H1 (cell line): ENCODE measurements at regions of chr11 and their contacts with region 1.

Region 1: DNA sequence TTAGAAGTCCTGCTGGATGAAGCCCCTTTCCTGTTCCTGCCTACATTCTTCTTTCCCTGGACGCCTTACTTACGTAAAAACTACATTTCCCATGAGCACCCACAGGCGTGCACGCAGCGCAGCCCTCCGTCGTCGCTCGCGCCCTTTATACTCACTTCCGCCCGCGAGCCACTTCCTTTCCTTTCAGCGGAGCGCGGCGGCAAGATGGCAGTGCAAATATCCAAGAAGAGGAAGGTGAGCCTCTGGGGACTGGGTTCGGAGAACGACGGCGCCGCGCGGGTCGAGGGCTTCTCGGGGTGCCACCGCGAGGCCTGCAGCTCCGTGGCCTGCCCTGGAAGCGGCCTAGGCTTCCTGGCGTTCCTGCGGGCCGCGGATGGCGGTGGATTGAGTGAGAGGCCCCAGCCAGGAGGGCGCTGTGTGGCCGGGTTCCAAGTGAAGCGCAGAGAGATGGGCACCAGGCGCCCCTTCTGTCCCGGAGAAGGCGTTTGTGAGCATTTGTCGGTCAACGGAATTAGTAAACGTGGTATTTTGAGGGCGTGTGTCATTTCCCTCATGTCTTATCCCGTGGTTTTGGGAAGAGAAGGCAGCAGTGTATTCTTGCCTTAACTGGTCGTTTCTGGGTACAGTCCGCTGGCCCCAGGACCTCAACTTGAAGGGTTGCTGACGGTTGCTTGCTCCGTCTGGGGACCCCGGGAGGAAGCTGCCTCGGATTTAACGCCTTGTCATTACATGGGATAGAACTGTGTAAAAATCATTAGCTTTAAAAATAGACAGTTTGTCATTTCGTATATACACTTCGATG is at the start of gene RPS3:
- DNase-seq: peak; percentile 80 to 90
- H3K4me3 ChIP-seq: peak within 1 kb of the TSS; percentile 86 to 100 (median 99)
- H3K27ac ChIP-seq: peak within 1 kb of the TSS; percentile 97
- H3K4me1 ChIP-seq: peaks cover 0 to 9% (median 4%) of the 10 kb centered on the region in 4 experiments; a peak in 6 of 7 replicates
- H3K27me3 ChIP-seq: no peaks in the 10 kb centered on the region
- CTCF ChIP-seq: no peak
- EP300 ChIP-seq: no peak
- POLR2A ChIP-seq: peak; percentile 99
- RAD21 ChIP-seq: no peak
- total RNA-seq, gene RPS3: 3,813 and 3,882 TPM in 2 replicates

Region 2: GRCh38 chr11:75087319-75088305 is 311.9 kb before region 1 on chr11:
- CTCF ChIA-PET with region 1: no interaction called
- POLR2A ChIA-PET with region 1: no interaction called
- DNase-seq: no peak
- H3K4me3 ChIP-seq: no peak overlapping the region
- H3K27ac ChIP-seq: no peak overlapping the region
- H3K4me1 ChIP-seq: no peaks in the 10 kb centered on the region
- H3K27me3 ChIP-seq: no peaks in the 10 kb centered on the region
- CTCF ChIP-seq: peak in 2 of 3 experiments; percentile 10 to 42; a peak in 3 of 4 replicates
- EP300 ChIP-seq: no peak
- POLR2A ChIP-seq: no peak
- RAD21 ChIP-seq: no peak

Region 3: DNA sequence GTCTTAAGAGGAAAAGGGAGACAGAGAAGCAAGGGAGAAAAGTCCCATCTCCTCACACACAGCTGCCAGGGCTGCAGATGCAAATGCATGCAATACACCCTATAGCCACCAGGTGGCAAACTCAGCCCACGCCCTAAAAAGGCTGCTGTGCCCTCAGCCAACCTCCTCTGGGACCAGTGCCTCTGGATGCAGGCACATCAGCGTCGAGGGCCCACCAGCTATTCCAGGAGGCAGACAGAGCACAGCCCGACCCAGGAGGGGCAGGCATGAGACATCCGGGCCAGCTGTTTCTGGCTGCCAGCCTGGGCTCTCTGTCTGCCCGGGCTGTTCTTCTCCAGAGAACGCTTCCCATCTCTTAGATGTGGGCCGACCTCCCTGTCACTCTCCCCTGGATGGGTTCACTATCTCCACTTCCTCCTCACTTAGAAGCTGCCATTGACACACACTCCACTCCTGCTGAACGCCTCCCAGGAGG is 119.3 kb before region 1 on chr11:
- CTCF ChIA-PET with region 1: interaction called, 5 read pairs
- POLR2A ChIA-PET with region 1: interaction called, 11 read pairs
- DNase-seq: peak; percentile 76 to 92
- H3K4me3 ChIP-seq: no peak overlapping the region
- H3K27ac ChIP-seq: no peak overlapping the region
- H3K4me1 ChIP-seq: peaks cover 0 to 6% (median 0%) of the 10 kb centered on the region in 4 experiments; a peak in 2 of 7 replicates
- H3K27me3 ChIP-seq: no peaks in the 10 kb centered on the region
- CTCF ChIP-seq: peak; percentile 94 to 100 (median 96)
- EP300 ChIP-seq: no peak
- POLR2A ChIP-seq: no peak
- RAD21 ChIP-seq: peak; percentile 98

Region 4: GRCh38 chr11:75351791-75352587 is 47.6 kb before region 1 on chr11:
- CTCF ChIA-PET with region 1: interaction called, 4 read pairs
- POLR2A ChIA-PET with region 1: interaction called, 12 read pairs
- DNase-seq: peak in 1 of 2 experiments; percentile 63
- H3K4me3 ChIP-seq: peak overlapping the region; percentile 53 to 82 (median 58)
- H3K27ac ChIP-seq: no peak overlapping the region
- H3K4me1 ChIP-seq: peaks cover 10 to 28% (median 15%) of the 10 kb centered on the region in 4 experiments
- H3K27me3 ChIP-seq: peaks cover 4 to 11% (median 10%) of the 10 kb centered on the region in 4 experiments; a peak in 6 of 7 replicates
- CTCF ChIP-seq: peak in 2 of 3 experiments; percentile 13 to 22; a peak in 2 of 4 replicates
- EP300 ChIP-seq: no peak
- POLR2A ChIP-seq: no peak
- RAD21 ChIP-seq: peak; percentile 5 to 22; a peak in 1 of 4 replicates

Region 5: DNA sequence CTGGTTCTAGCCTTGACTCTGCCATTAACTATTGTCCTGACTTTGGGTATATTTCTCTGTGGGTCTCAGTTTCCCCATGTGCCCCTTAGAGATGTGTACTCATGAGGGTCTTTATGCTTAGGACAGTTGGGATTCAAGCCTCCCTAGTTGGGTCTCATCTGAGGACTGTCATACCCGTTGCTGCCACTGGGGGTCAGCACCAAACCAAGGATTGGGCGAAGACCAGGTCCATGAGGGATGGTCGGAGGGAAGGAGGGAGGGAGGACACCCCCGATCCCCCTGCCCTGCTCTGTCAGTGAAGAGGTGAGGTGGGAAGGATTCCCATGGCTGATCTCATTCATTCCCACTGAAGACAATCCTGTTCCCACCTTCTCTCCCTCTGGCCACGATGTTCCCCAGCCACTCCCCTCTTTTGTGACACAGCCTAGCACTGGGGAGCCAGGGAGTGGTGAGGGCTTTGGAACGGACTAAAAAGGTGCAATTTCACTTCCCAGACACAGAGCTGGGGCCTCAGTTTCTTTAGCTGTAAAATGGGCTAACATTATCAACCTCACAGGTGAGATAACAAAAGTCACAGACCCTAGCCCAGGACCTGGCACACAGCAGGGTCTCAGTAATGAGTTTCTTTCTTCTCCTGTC is 45.9 kb after region 1 on chr11:
- CTCF ChIA-PET with region 1: interaction called, 7 read pairs
- POLR2A ChIA-PET with region 1: interaction called, 13 read pairs
- DNase-seq: peak in 1 of 2 experiments; percentile 95
- H3K4me3 ChIP-seq: no peak overlapping the region
- H3K27ac ChIP-seq: no peak overlapping the region
- H3K4me1 ChIP-seq: no peaks in the 10 kb centered on the region
- H3K27me3 ChIP-seq: no peaks in the 10 kb centered on the region
- CTCF ChIP-seq: peak; percentile 94 to 98 (median 94)
- EP300 ChIP-seq: no peak
- POLR2A ChIP-seq: no peak
- RAD21 ChIP-seq: peak; percentile 99 to 100

Region 6: DNA sequence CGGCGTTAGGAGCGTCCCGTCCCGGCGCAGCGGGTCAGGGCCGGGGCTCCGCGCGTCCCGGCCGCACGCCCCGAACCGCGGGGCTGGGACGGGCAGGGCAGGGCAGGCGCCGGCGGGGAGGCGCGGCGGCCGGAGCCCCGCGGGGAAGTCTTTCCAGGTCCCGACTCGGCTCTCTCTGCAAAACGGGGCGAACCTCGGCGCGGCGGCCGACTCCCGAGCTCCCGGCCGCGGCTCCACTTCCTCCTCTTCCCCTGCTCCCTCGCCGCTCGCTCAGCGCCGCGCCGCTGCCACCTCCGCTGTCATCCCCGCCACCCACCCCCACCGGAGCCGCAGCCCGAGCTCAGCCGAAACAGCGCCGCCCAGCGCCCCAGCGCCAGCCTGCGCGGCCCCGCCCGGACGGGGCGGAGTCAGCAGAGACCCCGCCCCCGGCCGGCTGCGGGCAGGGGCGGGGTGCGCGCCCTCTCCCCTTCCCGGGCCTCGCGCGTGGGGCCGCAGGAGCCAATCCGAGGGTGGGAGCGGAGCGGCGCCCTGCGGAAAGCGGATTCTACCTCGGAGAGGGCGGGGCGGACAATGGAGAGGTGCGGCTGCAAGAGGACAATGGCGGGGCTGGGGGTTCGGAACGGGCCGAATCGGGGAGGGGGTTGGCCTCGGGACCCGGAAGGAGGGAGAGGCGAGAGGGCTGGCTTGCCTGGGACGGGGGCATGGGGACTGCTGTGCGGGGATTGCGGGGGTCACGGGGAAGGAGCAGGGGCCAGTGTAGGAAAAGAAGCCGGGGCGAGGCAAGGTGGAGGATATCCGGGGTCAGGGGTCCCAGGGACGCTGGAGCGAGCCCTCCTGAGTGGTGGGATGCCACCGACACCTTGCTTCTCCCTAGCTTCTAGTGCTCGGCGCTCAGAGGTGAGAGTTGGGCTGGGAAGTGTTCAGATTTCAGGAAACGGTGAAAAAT is 126.3 kb after region 1 on chr11 and contains the start of gene GDPD5:
- CTCF ChIA-PET with region 1: no interaction called
- POLR2A ChIA-PET with region 1: interaction called, 11 read pairs
- DNase-seq: peak; percentile 54 to 87
- H3K4me3 ChIP-seq: peak within 1 kb of the TSS; percentile 47 to 77 (median 76)
- H3K27ac ChIP-seq: no peak within 1 kb of the TSS
- H3K4me1 ChIP-seq: peaks cover 0 to 7% (median 1%) of the 10 kb centered on the region in 4 experiments; a peak in 2 of 7 replicates
- H3K27me3 ChIP-seq: peaks cover 14 to 33% (median 19%) of the 10 kb centered on the region in 4 experiments; a peak in 6 of 7 replicates
- CTCF ChIP-seq: peak; percentile 58 to 65 (median 64)
- EP300 ChIP-seq: no peak
- POLR2A ChIP-seq: peak in 1 of 2 experiments; percentile 54; a peak in 1 of 3 replicates
- RAD21 ChIP-seq: peak; percentile 15 to 51; a peak in 3 of 4 replicates
- total RNA-seq, gene GDPD5: 8.1 and 8.6 TPM in 2 replicates

Region 7: GRCh38 chr11:75878933-75879332 is 479.4 kb after region 1 on chr11:
- CTCF ChIA-PET with region 1: no interaction called
- POLR2A ChIA-PET with region 1: no interaction called
- DNase-seq: no peak
- H3K4me3 ChIP-seq: no peak overlapping the region
- H3K27ac ChIP-seq: no peak overlapping the region
- H3K4me1 ChIP-seq: no peaks in the 10 kb centered on the region
- H3K27me3 ChIP-seq: no peaks in the 10 kb centered on the region
- CTCF ChIP-seq: no peak
- EP300 ChIP-seq: no peak
- POLR2A ChIP-seq: no peak
- RAD21 ChIP-seq: no peak

Region 8: GRCh38 chr11:76120513-76121101 is 721.1 kb after region 1 on chr11:
- CTCF ChIA-PET with region 1: no interaction called
- POLR2A ChIA-PET with region 1: no interaction called
- DNase-seq: peak in 1 of 2 experiments; percentile 15
- H3K4me3 ChIP-seq: no peak overlapping the region
- H3K27ac ChIP-seq: no peak overlapping the region
- H3K4me1 ChIP-seq: peaks cover 4 to 19% (median 8%) of the 10 kb centered on the region in 4 experiments; a peak in 6 of 7 replicates
- H3K27me3 ChIP-seq: no peaks in the 10 kb centered on the region
- CTCF ChIP-seq: no peak
- EP300 ChIP-seq: no peak
- POLR2A ChIP-seq: no peak
- RAD21 ChIP-seq: no peak